PC-9 (cell line): ENCODE measurements at regions of chr3 and their contacts with region 1.

Region 1: DNA sequence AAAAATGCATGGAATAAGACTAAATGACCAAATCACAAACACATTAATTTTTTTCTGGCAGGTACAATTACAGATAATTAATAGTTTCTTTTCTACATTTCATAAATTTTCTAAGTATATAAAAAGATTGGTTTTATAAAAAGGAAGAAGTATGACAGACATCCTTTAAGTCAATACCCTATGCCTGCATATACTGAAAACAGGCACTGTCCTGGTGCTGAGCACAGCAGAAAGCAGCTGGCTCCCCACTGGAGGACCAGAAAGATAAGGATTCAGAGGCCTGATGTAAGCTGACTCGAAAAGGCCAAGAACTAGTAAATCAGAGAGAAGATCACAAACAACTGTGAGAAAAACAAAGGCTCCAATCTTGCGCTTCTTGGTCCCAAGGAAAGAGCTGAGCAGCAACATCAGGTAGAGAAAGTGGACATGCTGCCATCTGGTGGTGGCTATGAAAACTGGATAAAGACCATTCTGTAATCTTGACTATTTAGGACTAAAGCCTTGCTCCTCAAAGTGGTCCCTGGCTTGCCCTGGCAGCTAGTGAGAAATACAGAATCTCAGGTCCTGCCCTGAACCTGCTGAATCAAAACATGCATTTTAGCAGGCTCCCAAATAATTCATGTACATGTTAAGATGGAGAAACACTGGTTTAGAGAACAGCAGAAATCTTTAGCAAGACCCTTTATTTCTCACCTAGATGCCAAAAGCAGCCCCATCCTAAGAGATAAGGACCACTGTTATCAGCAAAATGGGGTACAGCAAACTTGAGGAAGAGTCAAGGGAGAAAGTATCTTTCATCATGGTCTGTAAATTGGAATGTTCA is 76.0 kb downstream of the TRANK1 start:
- DNase-seq: peak; percentile 32 to 58
- H3K4me3 ChIP-seq: no peak overlapping the region
- H3K27ac ChIP-seq: no peak overlapping the region
- H3K4me1 ChIP-seq: no peaks in the 10 kb centered on the region
- H3K27me3 ChIP-seq: no peaks in the 10 kb centered on the region
- CTCF ChIP-seq: peak; percentile 79

Region 2: DNA sequence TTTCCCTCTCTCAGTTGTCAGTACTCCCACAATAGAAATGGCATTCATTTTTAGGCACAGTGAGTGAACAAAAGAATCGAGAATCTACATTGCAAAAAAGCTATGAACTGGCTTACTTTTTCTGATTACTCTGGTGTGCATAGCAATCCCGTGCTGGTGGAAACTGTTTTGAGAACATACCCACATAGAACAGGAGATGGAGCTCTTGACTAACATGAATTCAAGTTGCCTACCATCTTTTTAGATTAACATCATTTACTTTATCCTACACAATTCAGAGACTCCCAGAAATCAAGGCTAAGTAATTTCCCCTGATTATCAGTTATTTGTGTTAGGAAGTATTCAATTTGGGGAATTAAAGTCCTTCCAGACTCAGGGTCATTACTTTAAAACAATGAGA is 902.9 kb before region 1 on chr3:
- CTCF ChIA-PET with region 1: no interaction called
- POLR2A ChIA-PET with region 1: no interaction called
- intact Hi-C with region 1: loop called (anchors 2 kb)
- DNase-seq: peak in 1 of 2 experiments; percentile 43
- H3K4me3 ChIP-seq: no peak overlapping the region
- H3K27ac ChIP-seq: no peak overlapping the region
- H3K4me1 ChIP-seq: no peaks in the 10 kb centered on the region
- H3K27me3 ChIP-seq: no peaks in the 10 kb centered on the region
- CTCF ChIP-seq: peak; percentile 66

Region 3: DNA sequence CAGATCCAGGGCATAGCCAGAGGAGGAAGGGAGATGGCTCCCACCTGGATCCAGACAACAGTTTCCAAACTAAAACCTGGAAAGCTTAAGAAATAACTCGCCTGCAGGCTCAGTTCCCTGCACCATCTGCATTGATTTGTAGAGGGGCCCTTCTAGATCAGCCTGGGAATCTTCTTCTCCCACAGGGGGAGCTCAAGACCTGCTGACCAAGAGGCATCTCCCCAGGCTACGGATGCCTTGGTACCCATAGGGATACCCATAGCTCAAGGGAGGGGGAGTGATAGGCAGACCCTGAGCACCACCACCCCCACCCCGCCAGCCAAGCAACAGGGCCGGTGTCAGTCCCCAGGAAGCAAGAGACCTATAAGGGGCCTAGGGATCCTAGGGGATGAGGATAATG is 76.5 kb before region 1 on chr3:
- CTCF ChIA-PET with region 1: interaction called, 12 read pairs
- POLR2A ChIA-PET with region 1: no interaction called
- intact Hi-C with region 1: loop called (anchors 1 kb)
- DNase-seq: peak in 1 of 2 experiments; percentile 13
- H3K4me3 ChIP-seq: no peak overlapping the region
- H3K27ac ChIP-seq: no peak overlapping the region
- H3K4me1 ChIP-seq: no peaks in the 10 kb centered on the region
- H3K27me3 ChIP-seq: no peaks in the 10 kb centered on the region
- CTCF ChIP-seq: peak; percentile 52

Region 4: DNA sequence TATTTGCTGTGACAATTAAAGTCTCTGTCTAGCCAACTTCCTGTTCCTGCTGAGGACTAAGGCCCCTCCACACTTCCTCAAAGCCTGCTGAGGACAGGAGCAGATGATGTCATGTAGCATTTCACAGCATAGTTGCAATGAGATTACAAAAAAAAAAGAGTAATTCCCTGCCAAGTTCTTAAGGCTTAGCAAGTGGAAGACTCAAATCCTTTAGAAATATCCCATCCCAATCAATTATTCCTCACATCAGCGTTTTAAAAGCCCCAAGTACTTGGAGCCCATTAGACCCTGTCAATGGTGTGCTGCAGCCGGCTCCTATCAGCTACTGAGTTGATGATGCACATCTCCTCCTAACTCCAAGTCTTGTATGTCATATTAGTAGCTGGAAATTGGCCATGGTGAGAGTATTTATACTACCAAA is 24.3 kb after region 1 on chr3:
- CTCF ChIA-PET with region 1: no interaction called
- POLR2A ChIA-PET with region 1: no interaction called
- intact Hi-C with region 1: no loop called
- DNase-seq: no peak
- H3K4me3 ChIP-seq: no peak overlapping the region
- H3K27ac ChIP-seq: no peak overlapping the region
- H3K4me1 ChIP-seq: no peaks in the 10 kb centered on the region
- H3K27me3 ChIP-seq: no peaks in the 10 kb centered on the region
- CTCF ChIP-seq: no peak